Thyroid gland (tissue), 4 donors: ENCODE measurements at regions of chr3 and their contacts with region 1.

Region 1: DNA sequence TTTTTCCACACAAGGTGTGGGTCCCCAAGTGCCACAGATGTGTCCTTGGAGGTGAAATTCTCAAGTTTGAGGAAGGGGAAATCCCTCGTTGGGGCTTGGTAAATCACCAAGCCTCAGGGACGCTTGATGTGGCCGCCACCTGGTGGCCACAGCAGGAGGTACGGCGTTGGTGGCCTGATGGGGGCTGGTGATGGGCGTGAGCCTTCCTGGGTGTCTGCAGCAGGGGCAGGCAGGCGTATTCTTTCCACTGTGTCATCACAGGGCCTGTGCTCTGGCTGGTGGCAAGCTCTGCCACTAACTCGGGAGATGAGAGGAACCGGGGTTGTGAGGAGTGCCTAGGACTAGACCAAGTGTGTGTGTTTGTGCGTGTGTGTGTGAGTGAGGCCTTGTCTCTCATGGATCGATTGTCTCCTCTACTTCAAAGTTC is 4.2 kb downstream of the ACOX2 start:
- DNase-seq: peak; percentile 75 to 82
- H3K4me3 ChIP-seq: no peak overlapping the region
- H3K27ac ChIP-seq: no peak overlapping the region
- H3K4me1 ChIP-seq: peaks cover 31 to 46% of the 10 kb centered on the region in 2 donors
- H3K27me3 ChIP-seq: no peaks in the 10 kb centered on the region
- CTCF ChIP-seq: peak; percentile 76 to 95 (median 92)
- POLR2A ChIP-seq: no peak

Region 2: GRCh38 chr3:58237238-58237940 is 295.4 kb before region 1 on chr3 and contains the start of gene ABHD6:
- intact Hi-C with region 1: no loop called
- DNase-seq: peak; percentile 73 to 74
- H3K4me3 ChIP-seq: peak within 1 kb of the TSS; percentile 77 to 92 (median 84)
- H3K27ac ChIP-seq: peak within 1 kb of the TSS in 2 of 3 donors; percentile 70 to 73
- H3K4me1 ChIP-seq: peaks cover 0 to 18% of the 10 kb centered on the region in 2 donors
- H3K27me3 ChIP-seq: no peaks in the 10 kb centered on the region
- CTCF ChIP-seq: peak in 3 of 6 experiments; percentile 18 to 66 (median 25)
- POLR2A ChIP-seq: peak in 1 of 2 donors; percentile 39
- total RNA-seq, gene ABHD6: 14.7 to 28.6 (median 18.0) TPM

Region 3: DNA sequence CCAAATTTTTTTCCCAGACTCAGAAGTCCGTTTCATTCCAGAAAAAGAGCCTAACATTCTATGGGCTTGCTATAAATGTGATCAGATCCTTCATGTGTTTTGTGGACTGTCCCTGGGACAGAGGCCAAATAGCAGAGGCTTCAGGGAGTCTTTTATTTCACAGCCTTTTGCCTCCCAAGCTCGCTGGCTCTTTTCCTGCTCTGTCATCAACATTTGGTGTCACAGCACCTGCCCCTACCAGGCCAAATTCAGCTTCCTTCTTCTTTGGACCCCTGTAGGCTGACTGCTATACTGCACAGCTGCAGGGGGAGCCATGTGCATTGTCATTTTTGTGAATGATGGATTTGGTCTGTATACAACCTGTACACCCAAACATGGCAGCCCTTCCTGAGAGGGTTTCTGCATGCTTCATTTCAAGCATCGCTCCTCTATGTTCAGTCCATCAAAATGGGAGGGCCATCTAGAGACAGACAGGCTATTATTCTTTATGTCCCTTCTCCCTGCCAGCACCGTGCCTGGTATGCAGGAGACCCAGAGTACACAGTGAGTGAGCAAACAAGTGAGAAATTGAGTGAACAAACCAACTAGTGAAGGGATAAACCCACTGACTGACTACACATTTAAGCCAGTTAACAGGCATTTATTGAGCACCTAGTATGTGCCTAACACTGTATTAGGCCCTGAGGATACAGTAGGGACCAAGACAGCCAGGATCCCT is 244.6 kb before region 1 on chr3:
- intact Hi-C with region 1: no loop called
- DNase-seq: peak; percentile 52 to 62
- H3K4me3 ChIP-seq: no peak overlapping the region
- H3K27ac ChIP-seq: peak overlapping the region; percentile 4 to 58 (median 19)
- H3K4me1 ChIP-seq: peaks cover 21 to 34% of the 10 kb centered on the region in 2 donors
- H3K27me3 ChIP-seq: no peaks in the 10 kb centered on the region
- CTCF ChIP-seq: no peak
- POLR2A ChIP-seq: no peak

Region 4: DNA sequence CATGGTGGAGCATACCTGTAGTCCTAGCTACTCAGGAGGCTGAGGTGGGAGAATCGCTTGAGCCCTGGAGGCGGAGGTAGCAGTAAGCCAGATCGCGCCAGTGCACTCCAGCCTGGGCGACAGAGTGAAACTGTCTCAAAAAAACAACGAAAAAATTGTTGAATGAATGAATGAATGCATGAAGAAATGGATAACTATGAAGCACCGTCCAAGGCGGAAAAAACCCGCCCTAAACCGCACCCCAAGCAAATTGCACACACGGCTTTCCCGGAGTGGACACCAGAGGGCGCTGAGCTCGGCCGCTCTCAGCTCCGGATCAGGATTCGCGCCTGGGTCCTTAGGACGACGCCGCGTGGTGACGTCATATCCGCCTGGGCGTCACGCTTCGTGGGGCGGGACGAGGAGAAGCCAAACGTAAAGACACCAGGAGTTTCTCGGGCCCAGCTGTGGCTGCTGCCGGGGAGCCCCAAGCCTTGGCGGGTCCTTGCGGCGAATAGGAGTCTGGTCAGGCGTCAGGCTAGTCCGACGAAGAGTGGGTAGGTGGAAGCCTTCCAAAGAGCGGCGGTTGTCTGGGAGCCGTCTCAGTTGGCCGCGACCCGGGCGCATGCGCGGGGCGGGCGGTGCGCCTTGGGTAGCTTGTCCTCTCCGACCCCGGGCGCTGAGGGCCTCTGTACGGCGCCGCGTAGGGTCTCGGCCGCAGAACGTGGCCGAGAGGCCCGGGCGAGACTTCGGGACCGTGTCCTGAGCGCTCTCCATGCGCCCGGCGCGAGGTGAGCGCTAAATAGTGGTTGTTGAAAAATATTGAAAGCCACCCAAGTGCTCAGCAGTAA is 226.7 kb before region 1 on chr3 and contains the starts of genes HTD2 and RPP14:
- intact Hi-C with region 1: loop called (anchors 5 kb)
- DNase-seq: peak; percentile 97 to 98
- H3K4me3 ChIP-seq: peak within 1 kb of the TSS; percentile 41 to 78 (median 62)
- H3K27ac ChIP-seq: peak within 1 kb of the TSS; percentile 94 to 97 (median 96)
- H3K4me1 ChIP-seq: peaks cover 15 to 21% of the 10 kb centered on the region in 2 donors
- H3K27me3 ChIP-seq: no peaks in the 10 kb centered on the region
- CTCF ChIP-seq: peak; percentile 90 to 97 (median 95)
- POLR2A ChIP-seq: peak; percentile 44 to 76
- total RNA-seq, gene HTD2: 8.4 to 19.8 (median 18.6) TPM
- total RNA-seq, gene RPP14: 13.4 to 19.9 (median 15.7) TPM

Region 5: GRCh38 chr3:58419780-58420507 is 112.9 kb before region 1 on chr3:
- intact Hi-C with region 1: loop called (anchors 10 kb)
- DNase-seq: peak in 1 of 2 donors; percentile 12
- H3K4me3 ChIP-seq: no peak overlapping the region
- H3K27ac ChIP-seq: peak overlapping the region in 2 of 3 donors; percentile 53 to 71
- H3K4me1 ChIP-seq: peaks cover 0 to 23% of the 10 kb centered on the region in 2 donors
- H3K27me3 ChIP-seq: no peaks in the 10 kb centered on the region
- CTCF ChIP-seq: no peak
- POLR2A ChIP-seq: no peak

Region 6: GRCh38 chr3:58471025-58471887 is 61.6 kb before region 1 on chr3:
- intact Hi-C with region 1: no loop called
- DNase-seq: peak; percentile 27 to 36
- H3K4me3 ChIP-seq: no peak overlapping the region
- H3K27ac ChIP-seq: peak overlapping the region; percentile 28 to 65 (median 39)
- H3K4me1 ChIP-seq: peaks cover 8 to 15% of the 10 kb centered on the region in 2 donors
- H3K27me3 ChIP-seq: no peaks in the 10 kb centered on the region
- CTCF ChIP-seq: no peak
- POLR2A ChIP-seq: no peak

Region 7: DNA sequence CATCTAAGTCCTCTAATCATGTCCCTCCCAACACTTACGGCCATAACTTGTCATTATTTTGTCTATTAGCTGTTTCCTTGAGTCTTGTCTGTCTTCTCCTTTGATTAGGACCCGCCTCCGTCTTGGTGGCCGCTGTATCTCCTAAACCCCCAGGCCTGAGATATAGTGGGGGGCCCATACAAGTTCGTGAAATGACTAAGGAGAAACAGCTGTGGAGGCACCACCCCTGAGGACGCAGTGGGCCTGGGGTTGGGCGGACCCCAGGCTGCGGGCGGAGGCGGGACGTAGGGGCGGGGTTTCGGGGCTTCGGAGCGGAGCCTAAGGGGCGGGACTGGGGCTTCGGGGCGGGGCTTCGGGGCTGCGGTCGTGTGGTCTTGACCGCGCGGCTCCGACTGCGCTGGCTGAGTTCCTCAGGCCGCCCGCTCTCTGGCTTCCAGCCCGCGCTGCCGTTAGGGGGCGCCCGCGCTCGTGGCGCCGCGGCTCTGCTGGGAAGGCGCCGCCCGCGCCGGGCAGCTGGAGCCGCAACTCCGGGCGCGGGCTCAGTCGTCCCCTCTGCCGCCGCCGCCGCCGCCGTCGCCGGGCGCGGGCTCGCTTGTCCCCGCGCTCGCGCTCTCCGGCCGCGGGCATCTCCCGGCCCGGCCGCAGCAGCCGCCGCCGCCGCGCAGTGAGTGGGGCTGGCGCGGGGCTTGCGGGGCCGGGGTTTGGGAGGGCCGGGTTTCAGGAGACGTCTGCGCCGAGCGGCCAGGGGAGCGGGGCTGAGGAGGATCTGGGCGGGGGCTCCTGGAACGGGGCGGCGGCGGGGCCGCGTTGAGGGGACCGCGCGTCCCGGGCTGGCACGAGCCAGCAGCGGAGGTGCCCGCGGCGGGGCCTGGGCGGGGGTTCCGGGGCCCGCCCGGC is 41.1 kb before region 1 on chr3 and contains the start of gene KCTD6:
- intact Hi-C with region 1: loop called (anchors 5 kb)
- DNase-seq: peak; percentile 92 to 94
- H3K4me3 ChIP-seq: peak within 1 kb of the TSS; percentile 29 to 60 (median 45)
- H3K27ac ChIP-seq: peak within 1 kb of the TSS; percentile 78 to 94 (median 82)
- H3K4me1 ChIP-seq: peaks cover 30 to 31% of the 10 kb centered on the region in 2 donors
- H3K27me3 ChIP-seq: no peaks in the 10 kb centered on the region
- CTCF ChIP-seq: peak in 5 of 6 experiments; percentile 34 to 95 (median 91)
- POLR2A ChIP-seq: peak; percentile 28 to 72
- total RNA-seq, gene KCTD6: 16.6 to 33.6 (median 21.3) TPM